Dendritic cell treated with granulocyte-macrophage colony-stimulating factor and Interleukin-4, amounts not matched to agents 40 ng/mL and 50 ng/mL, for 4 days (primary cell): ENCODE measurements at regions of chr17 and their contacts with region 1.

Region 1: GRCh38 chr17:75430159-75430974 is 24.9 kb upstream of the GRB2 start:
- H3K4me3 Mint-ChIP-seq: no peak overlapping the region
- H3K27ac Mint-ChIP-seq: no peak overlapping the region
- H3K4me1 Mint-ChIP-seq: peaks cover 29% of the 10 kb centered on the region
- H3K27me3 Mint-ChIP-seq: peaks cover 14% of the 10 kb centered on the region

Region 2: DNA sequence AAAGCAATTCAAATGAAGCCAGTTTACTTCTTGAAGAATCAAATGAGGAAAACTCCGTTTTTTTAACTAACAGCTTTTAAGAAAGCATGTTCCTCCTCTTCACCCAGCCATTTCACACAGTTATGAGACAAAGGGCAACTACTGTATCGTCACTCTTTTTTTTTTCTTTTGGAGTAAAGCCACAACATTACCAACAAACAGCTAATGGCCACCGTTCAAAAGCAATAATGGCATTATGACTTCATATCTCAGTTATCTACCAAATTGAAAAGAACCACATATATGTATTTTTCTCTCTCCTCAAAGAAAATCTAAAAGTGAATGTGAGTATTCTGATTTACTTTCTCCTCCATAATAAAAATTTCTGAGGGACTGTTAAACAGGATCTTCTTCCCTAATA is 39.4 kb before region 1 on chr17:
- intact Hi-C with region 1: no loop called
- H3K4me3 Mint-ChIP-seq: no peak overlapping the region
- H3K27ac Mint-ChIP-seq: no peak overlapping the region
- H3K4me1 Mint-ChIP-seq: peaks cover 80% of the 10 kb centered on the region
- H3K27me3 Mint-ChIP-seq: no peaks in the 10 kb centered on the region

Region 3: GRCh38 chr17:75456417-75457046 is 26.2 kb after region 1 on chr17 and contains the start of gene TMEM94:
- intact Hi-C with region 1: loop called (anchors 1 kb)
- H3K4me3 Mint-ChIP-seq: peak within 1 kb of the TSS; percentile 86
- H3K27ac Mint-ChIP-seq: peak within 1 kb of the TSS; percentile 98
- H3K4me1 Mint-ChIP-seq: peaks cover 48% of the 10 kb centered on the region
- H3K27me3 Mint-ChIP-seq: no peaks in the 10 kb centered on the region

Region 4: GRCh38 chr17:75487351-75488070 is 57.1 kb after region 1 on chr17:
- intact Hi-C with region 1: loop called (anchors 2 kb)
- H3K4me3 Mint-ChIP-seq: peak overlapping the region; percentile 66
- H3K27ac Mint-ChIP-seq: peak overlapping the region; percentile 92
- H3K4me1 Mint-ChIP-seq: peaks cover 46% of the 10 kb centered on the region
- H3K27me3 Mint-ChIP-seq: no peaks in the 10 kb centered on the region

Region 5: DNA sequence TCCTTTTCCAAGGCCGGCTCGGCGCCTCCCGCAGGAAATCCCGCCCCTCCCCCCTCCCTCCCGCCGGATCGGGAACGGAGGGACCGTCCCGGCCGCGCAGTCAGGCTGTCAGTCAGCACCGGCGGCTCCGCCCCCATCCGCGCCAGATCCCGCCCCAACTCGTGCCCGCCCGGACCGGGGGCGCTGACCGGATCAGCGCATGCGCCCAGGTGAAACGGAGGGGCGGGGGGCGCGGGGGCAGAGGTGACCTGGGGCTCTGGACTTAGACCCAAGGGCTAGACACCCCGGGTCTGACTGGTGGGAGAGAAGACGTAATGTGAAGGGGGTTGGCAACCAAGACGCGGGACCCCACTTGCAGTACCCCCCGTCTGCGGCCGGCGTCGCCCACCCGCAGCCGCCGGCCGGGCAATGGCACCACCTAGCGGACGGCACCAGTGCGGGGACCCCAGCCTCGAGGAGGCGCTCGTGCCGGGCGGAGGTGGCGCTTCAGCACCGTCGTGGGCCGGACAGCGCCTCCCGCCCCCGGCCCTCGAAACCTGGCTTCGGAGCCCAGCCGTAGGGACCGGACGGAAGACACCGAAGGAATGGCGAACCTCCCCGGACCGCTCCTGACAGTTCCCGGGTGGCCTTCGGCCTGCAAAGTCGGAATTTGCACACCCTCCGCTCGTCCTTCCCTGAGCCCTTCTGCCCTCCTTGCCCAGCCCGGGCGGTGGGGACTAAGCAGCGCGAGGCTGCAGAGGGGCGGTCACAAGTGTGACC is 85.3 kb after region 1 on chr17 and contains the start of gene CASKIN2:
- intact Hi-C with region 1: loop called (anchors 5 kb)
- H3K4me3 Mint-ChIP-seq: peak within 1 kb of the TSS; percentile 83
- H3K27ac Mint-ChIP-seq: peak within 1 kb of the TSS; percentile 59
- H3K4me1 Mint-ChIP-seq: peaks cover 26% of the 10 kb centered on the region
- H3K27me3 Mint-ChIP-seq: peaks cover 40% of the 10 kb centered on the region

Region 6: GRCh38 chr17:75589012-75589918 is 158.9 kb after region 1 on chr17:
- intact Hi-C with region 1: loop called (anchors 2 kb)
- H3K4me3 Mint-ChIP-seq: peak overlapping the region; percentile 78
- H3K27ac Mint-ChIP-seq: peak overlapping the region; percentile 93
- H3K4me1 Mint-ChIP-seq: peaks cover 29% of the 10 kb centered on the region
- H3K27me3 Mint-ChIP-seq: no peaks in the 10 kb centered on the region